ENCODE measurements at regions of chr14 and their contacts with region 1.

Region 1: GRCh38 chr14:99619835-99620834 is 16.1 kb upstream of the CCDC85C start:
- DNase-seq: no peak
- H3K4me3 ChIP-seq: no peak overlapping the region
- CTCF ChIP-seq: no peak

Region 2: DNA sequence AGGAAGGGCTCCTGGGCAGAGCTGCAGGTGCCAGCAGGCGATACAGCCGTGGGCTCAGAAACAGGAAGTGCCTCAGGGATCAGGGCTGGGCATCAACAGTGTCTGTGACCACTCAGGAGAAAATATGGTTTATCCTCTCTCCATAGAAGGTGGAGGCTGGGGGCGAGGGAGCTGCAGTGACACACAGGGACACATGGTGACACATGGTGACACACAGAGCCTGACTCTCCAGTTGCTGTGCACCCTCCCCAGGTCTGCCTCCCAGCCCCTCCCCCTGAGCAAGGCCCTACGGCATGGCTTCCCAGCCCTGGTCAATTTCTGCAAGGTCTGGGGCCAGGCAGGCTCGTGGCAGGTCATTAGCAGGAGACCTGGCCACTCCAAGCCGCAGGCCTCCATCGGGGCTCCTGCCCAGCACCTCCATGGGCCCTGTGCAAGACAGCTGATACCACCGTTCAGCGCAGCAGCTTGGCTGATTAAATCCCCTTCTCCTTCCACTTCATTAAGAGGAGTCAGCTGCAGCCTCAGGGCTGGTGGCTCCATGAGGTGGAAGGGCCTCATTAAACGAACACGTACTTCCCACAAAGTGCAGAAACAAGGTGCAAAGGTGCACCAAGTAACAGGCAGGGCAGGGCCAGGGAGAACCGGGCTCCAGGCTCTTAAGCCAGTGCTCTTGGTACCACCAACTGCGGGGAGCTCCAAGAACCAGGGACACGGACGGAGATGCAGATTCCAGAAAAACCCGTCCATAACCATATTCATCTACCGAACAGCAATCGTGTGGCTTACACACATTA is 78.3 kb before region 1 on chr14:
- in situ Hi-C with region 1: loop called (anchors 10 kb)
- DNase-seq: no peak
- H3K4me3 ChIP-seq: no peak overlapping the region
- CTCF ChIP-seq: no peak